ENCODE measurements at regions of chr1 and their contacts with region 1.

Region 1: GRCh38 chr1:32539584-32540571 is 651 bp downstream of the ZBTB8A start:
- DNase-seq: peak in 6 of 10 donors; percentile 8 to 50 (median 32)
- H3K4me3 ChIP-seq: peak overlapping the region; percentile 24 to 82 (median 64)
- H3K27ac ChIP-seq: peak overlapping the region in 39 of 59 donors; percentile 1 to 83 (median 65)
- H3K27me3 ChIP-seq: no peaks in the 10 kb centered on the region
- CTCF ChIP-seq: no peak

Region 2: GRCh38 chr1:32650752-32651460 is 111.0 kb after region 1 on chr1 and contains the start of gene RBBP4:
- intact Hi-C with region 1: loop called in 1 of 2 experiments (anchors 5 kb)
- DNase-seq: peak; percentile 94 to 98 (median 97)
- H3K4me3 ChIP-seq: peak within 1 kb of the TSS; percentile 69 to 99 (median 90)
- H3K27ac ChIP-seq: peak within 1 kb of the TSS; percentile 98 to 100 (median 100)
- H3K27me3 ChIP-seq: no peaks in the 10 kb centered on the region
- CTCF ChIP-seq: peak in 31 of 56 donors; percentile 7 to 47 (median 32)
- total RNA-seq, gene RBBP4: 115 to 177 (median 148) TPM